ENCODE measurements at regions of chr11 and their contacts with region 1.

Region 1: GRCh38 chr11:78645226-78646202 is 70.8 kb upstream of the NARS2 start:
- DNase-seq: peak; percentile 49 to 71
- ATAC-seq: peak; percentile 73 to 83 (median 82)
- H3K4me3 ChIP-seq: no peak overlapping the region
- H3K27ac ChIP-seq: no peak overlapping the region
- H3K4me1 ChIP-seq: no peaks in the 10 kb centered on the region
- H3K27me3 ChIP-seq: no peaks in the 10 kb centered on the region
- CTCF ChIP-seq: peak; percentile 97

Region 2: GRCh38 chr11:78188286-78189173 is 457.0 kb before region 1 on chr11 and contains the starts of genes KCTD21 and USP35:
- intact Hi-C with region 1: no loop called
- DNase-seq: peak; percentile 97 to 99
- ATAC-seq: peak; percentile 95 to 98 (median 96)
- H3K4me3 ChIP-seq: peak within 1 kb of the TSS; percentile 98
- H3K27ac ChIP-seq: peak within 1 kb of the TSS; percentile 79
- H3K4me1 ChIP-seq: peaks cover 41% of the 10 kb centered on the region
- H3K27me3 ChIP-seq: no peaks in the 10 kb centered on the region
- CTCF ChIP-seq: no peak
- total RNA-seq, gene KCTD21: 4.7 to 7.0 (median 5.8) TPM
- total RNA-seq, gene USP35: 2.0 to 4.4 (median 3.5) TPM

Region 3: GRCh38 chr11:78715639-78716311 is 70.3 kb after region 1 on chr11:
- intact Hi-C with region 1: loop called in 1 of 2 experiments (anchors 5 kb)
- DNase-seq: peak in 1 of 2 donors; percentile 22
- ATAC-seq: peak in 1 of 4 donors; percentile 59
- H3K4me3 ChIP-seq: no peak overlapping the region
- H3K27ac ChIP-seq: no peak overlapping the region
- H3K4me1 ChIP-seq: no peaks in the 10 kb centered on the region
- H3K27me3 ChIP-seq: no peaks in the 10 kb centered on the region
- CTCF ChIP-seq: peak; percentile 48

Region 4: DNA sequence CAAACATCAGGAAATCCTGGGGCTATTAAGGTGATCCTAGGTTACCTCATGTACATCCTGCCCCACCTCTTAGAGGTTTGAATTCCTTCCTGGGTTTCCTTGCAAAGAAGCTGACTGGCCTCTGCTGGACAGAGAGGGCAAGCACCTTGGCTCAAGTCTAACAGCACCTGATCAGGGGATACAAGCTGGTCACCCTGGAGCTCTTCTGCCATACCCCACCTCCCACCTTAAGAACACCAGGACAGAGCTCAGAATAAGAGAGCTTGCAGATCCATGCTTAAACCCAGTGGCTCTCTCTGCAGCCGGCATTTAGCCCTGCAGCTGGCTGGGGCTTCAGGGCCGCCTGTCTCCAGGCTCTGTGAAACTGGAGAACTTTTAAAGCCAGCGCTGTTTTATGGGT is 315.7 kb after region 1 on chr11:
- intact Hi-C with region 1: loop called (anchors 5 kb)
- DNase-seq: no peak
- ATAC-seq: peak in 2 of 4 donors; percentile 52 to 56
- H3K4me3 ChIP-seq: no peak overlapping the region
- H3K27ac ChIP-seq: no peak overlapping the region
- H3K4me1 ChIP-seq: no peaks in the 10 kb centered on the region
- H3K27me3 ChIP-seq: peaks cover 0 to 9% (median 0%) of the 10 kb centered on the region in 3 donors
- CTCF ChIP-seq: peak; percentile 29

Region 5: GRCh38 chr11:79076526-79077115 is 431.1 kb after region 1 on chr11:
- intact Hi-C with region 1: loop called (anchors 5 kb)
- DNase-seq: peak in 1 of 2 donors; percentile 46
- ATAC-seq: peak in 1 of 4 donors; percentile 49
- H3K4me3 ChIP-seq: no peak overlapping the region
- H3K27ac ChIP-seq: no peak overlapping the region
- H3K4me1 ChIP-seq: no peaks in the 10 kb centered on the region
- H3K27me3 ChIP-seq: no peaks in the 10 kb centered on the region
- CTCF ChIP-seq: peak; percentile 57

Region 6: GRCh38 chr11:79097246-79097875 is 451.8 kb after region 1 on chr11:
- intact Hi-C with region 1: loop called in 1 of 2 experiments (anchors 2 kb)
- DNase-seq: peak in 1 of 2 donors; percentile 25
- ATAC-seq: no peak
- H3K4me3 ChIP-seq: no peak overlapping the region
- H3K27ac ChIP-seq: no peak overlapping the region
- H3K4me1 ChIP-seq: peaks cover 10% of the 10 kb centered on the region
- H3K27me3 ChIP-seq: peaks cover 0 to 2% (median 0%) of the 10 kb centered on the region in 3 donors
- CTCF ChIP-seq: no peak

Region 7: GRCh38 chr11:79493555-79494171 is 848.1 kb after region 1 on chr11:
- intact Hi-C with region 1: loop called (anchors 2 to 5 kb)
- DNase-seq: peak; percentile 59 to 77
- ATAC-seq: peak; percentile 53 to 80 (median 72)
- H3K4me3 ChIP-seq: no peak overlapping the region
- H3K27ac ChIP-seq: no peak overlapping the region
- H3K4me1 ChIP-seq: no peaks in the 10 kb centered on the region
- H3K27me3 ChIP-seq: no peaks in the 10 kb centered on the region
- CTCF ChIP-seq: peak; percentile 74